SK-N-SH (cell line): ENCODE measurements at regions of chr12 and their contacts with region 1.

Region 1: GRCh38 chr12:109719236-109720022 is 5.8 kb downstream of the FAM222A start:
- DNase-seq: peak; percentile 72
- H3K4me3 ChIP-seq: peak overlapping the region in 1 of 2 experiments; percentile 62; a peak in 1 of 4 replicates
- H3K27ac ChIP-seq: peak overlapping the region in 1 of 2 experiments; percentile 92; a peak in 2 of 4 replicates
- H3K4me1 ChIP-seq: peaks cover 0 to 90% of the 10 kb centered on the region in 2 experiments; a peak in 2 of 4 replicates
- H3K27me3 ChIP-seq: no peaks in the 10 kb centered on the region; the same call in none of the 2 replicates
- CTCF ChIP-seq: peak; percentile 40
- EP300 ChIP-seq: no peak; a peak in 1 of 4 replicates
- RAD21 ChIP-seq: peak; percentile 62

Region 2: GRCh38 chr12:109653890-109654289 is 65.5 kb before region 1 on chr12:
- CTCF ChIA-PET with region 1: interaction called, 27 read pairs
- POLR2A ChIA-PET with region 1: interaction called, 82 read pairs
- DNase-seq: no peak
- H3K4me3 ChIP-seq: no peak overlapping the region
- H3K27ac ChIP-seq: peak overlapping the region in 1 of 2 experiments; percentile 96; a peak in 3 of 4 replicates
- H3K4me1 ChIP-seq: peaks cover 0 to 68% of the 10 kb centered on the region in 2 experiments; a peak in 2 of 4 replicates
- H3K27me3 ChIP-seq: peaks cover 14% of the 10 kb centered on the region; the same call in 1 of the 2 replicates
- CTCF ChIP-seq: no peak
- EP300 ChIP-seq: no peak; a peak in 1 of 4 replicates
- RAD21 ChIP-seq: no peak

Region 3: GRCh38 chr12:109739747-109740693 is 20.6 kb after region 1 on chr12:
- CTCF ChIA-PET with region 1: interaction called, 12 read pairs
- POLR2A ChIA-PET with region 1: interaction called, 5 read pairs
- DNase-seq: peak; percentile 59
- H3K4me3 ChIP-seq: no peak overlapping the region
- H3K27ac ChIP-seq: peak overlapping the region in 1 of 2 experiments; percentile 66; a peak in 2 of 4 replicates
- H3K4me1 ChIP-seq: peaks cover 0 to 98% of the 10 kb centered on the region in 2 experiments; a peak in 2 of 4 replicates
- H3K27me3 ChIP-seq: no peaks in the 10 kb centered on the region
- CTCF ChIP-seq: peak; percentile 33; the same call in 1 of the 2 replicates
- EP300 ChIP-seq: peak in 1 of 2 experiments; percentile 52; a peak in 1 of 4 replicates
- RAD21 ChIP-seq: peak; percentile 41

Region 4: GRCh38 chr12:109763201-109763841 is 43.9 kb after region 1 on chr12:
- CTCF ChIA-PET with region 1: interaction called, 13 read pairs
- POLR2A ChIA-PET with region 1: interaction called, 6 read pairs
- DNase-seq: no peak
- H3K4me3 ChIP-seq: no peak overlapping the region
- H3K27ac ChIP-seq: no peak overlapping the region
- H3K4me1 ChIP-seq: peaks cover 0 to 47% of the 10 kb centered on the region in 2 experiments; a peak in 1 of 4 replicates
- H3K27me3 ChIP-seq: no peaks in the 10 kb centered on the region
- CTCF ChIP-seq: no peak
- EP300 ChIP-seq: no peak
- RAD21 ChIP-seq: no peak

Region 5: GRCh38 chr12:109934026-109934425 is 214.6 kb after region 1 on chr12:
- CTCF ChIA-PET with region 1: no interaction called
- POLR2A ChIA-PET with region 1: no interaction called
- DNase-seq: no peak
- H3K4me3 ChIP-seq: no peak overlapping the region
- H3K27ac ChIP-seq: no peak overlapping the region
- H3K4me1 ChIP-seq: no peaks in the 10 kb centered on the region
- H3K27me3 ChIP-seq: no peaks in the 10 kb centered on the region
- CTCF ChIP-seq: peak; percentile 55
- EP300 ChIP-seq: no peak
- RAD21 ChIP-seq: no peak